GM12878 (cell line): ENCODE measurements at regions of chr2 and their contacts with region 1.

Region 1: GRCh38 chr2:69798909-69799526 is 30.4 kb upstream of the GMCL1 start:
- DNase-seq: no peak
- ATAC-seq: peak; percentile 68
- H3K4me3 ChIP-seq: peak overlapping the region; percentile 69
- H3K27ac ChIP-seq: peak overlapping the region; percentile 77
- H3K4me1 ChIP-seq: peaks cover 69% of the 10 kb centered on the region
- H3K27me3 ChIP-seq: no peaks in the 10 kb centered on the region
- CTCF ChIP-seq: no peak
- EP300 ChIP-seq: no peak
- POLR2A ChIP-seq: no peak
- RAD21 ChIP-seq: no peak

Region 2: GRCh38 chr2:69734035-69734631 is 64.9 kb before region 1 on chr2:
- CTCF ChIA-PET with region 1: interaction called, 6 read pairs
- POLR2A ChIA-PET with region 1: interaction called, 6 read pairs
- RAD21 ChIA-PET with region 1: interaction called, 6 read pairs
- SMC1A ChIA-PET with region 1: interaction called, 11 read pairs
- in situ Hi-C with region 1: no loop called
- intact Hi-C with region 1: no loop called
- DNase-seq: no peak
- ATAC-seq: no peak
- H3K4me3 ChIP-seq: no peak overlapping the region
- H3K27ac ChIP-seq: no peak overlapping the region
- H3K4me1 ChIP-seq: peaks cover 20% of the 10 kb centered on the region
- H3K27me3 ChIP-seq: no peaks in the 10 kb centered on the region
- CTCF ChIP-seq: no peak
- EP300 ChIP-seq: no peak
- POLR2A ChIP-seq: no peak
- RAD21 ChIP-seq: no peak

Region 3: DNA sequence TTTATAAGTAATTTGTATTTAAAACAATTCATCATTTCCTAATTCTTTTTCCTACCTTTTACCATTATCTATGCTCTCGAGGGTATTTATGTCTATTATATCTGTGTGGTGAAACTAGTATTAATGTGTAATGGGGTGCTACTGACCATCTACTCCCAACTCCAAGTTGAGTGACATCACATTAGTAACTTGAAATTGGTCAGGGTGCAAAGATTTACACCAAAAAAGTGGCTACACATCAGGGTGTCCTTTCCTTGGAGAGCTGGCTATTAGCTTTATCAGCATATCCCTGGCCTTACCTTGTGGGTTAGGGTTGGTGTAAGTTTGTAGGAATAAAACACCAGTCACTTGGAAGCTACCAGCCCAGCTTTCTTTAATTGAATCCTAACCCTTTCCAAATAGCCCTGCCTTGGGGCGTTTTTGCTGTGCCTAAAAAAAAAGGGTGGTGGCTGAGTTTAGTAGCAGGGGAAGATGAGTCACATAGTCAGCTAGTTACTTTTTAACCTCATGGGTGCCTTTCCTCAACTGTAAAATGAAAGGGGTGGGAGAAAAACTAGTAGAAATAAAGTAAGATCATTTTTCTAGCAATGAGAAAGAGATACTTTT is 43.1 kb before region 1 on chr2:
- CTCF ChIA-PET with region 1: no interaction called
- POLR2A ChIA-PET with region 1: interaction called, 10 read pairs
- RAD21 ChIA-PET with region 1: interaction called, 10 read pairs
- SMC1A ChIA-PET with region 1: interaction called, 12 read pairs
- in situ Hi-C with region 1: no loop called
- intact Hi-C with region 1: no loop called
- DNase-seq: no peak
- ATAC-seq: peak; percentile 90
- H3K4me3 ChIP-seq: no peak overlapping the region
- H3K27ac ChIP-seq: no peak overlapping the region
- H3K4me1 ChIP-seq: peaks cover 7% of the 10 kb centered on the region
- H3K27me3 ChIP-seq: no peaks in the 10 kb centered on the region
- CTCF ChIP-seq: no peak
- EP300 ChIP-seq: no peak
- POLR2A ChIP-seq: no peak
- RAD21 ChIP-seq: no peak

Region 4: GRCh38 chr2:69762513-69763497 is 36.2 kb before region 1 on chr2:
- CTCF ChIA-PET with region 1: interaction called, 5 read pairs
- POLR2A ChIA-PET with region 1: interaction called, 7 read pairs
- RAD21 ChIA-PET with region 1: interaction called, 21 read pairs
- SMC1A ChIA-PET with region 1: interaction called, 26 read pairs
- in situ Hi-C with region 1: no loop called
- intact Hi-C with region 1: no loop called
- DNase-seq: no peak
- ATAC-seq: peak; percentile 46
- H3K4me3 ChIP-seq: no peak overlapping the region
- H3K27ac ChIP-seq: peak overlapping the region; percentile 9; the same call in 1 of the 2 replicates
- H3K4me1 ChIP-seq: peaks cover 44% of the 10 kb centered on the region
- H3K27me3 ChIP-seq: no peaks in the 10 kb centered on the region
- CTCF ChIP-seq: no peak
- EP300 ChIP-seq: no peak
- POLR2A ChIP-seq: no peak
- RAD21 ChIP-seq: no peak

Region 5: GRCh38 chr2:69770193-69771146 is 28.5 kb before region 1 on chr2:
- CTCF ChIA-PET with region 1: interaction called, 7 read pairs
- POLR2A ChIA-PET with region 1: interaction called, 17 read pairs
- RAD21 ChIA-PET with region 1: interaction called, 33 read pairs
- SMC1A ChIA-PET with region 1: interaction called, 16 read pairs
- in situ Hi-C with region 1: no loop called
- intact Hi-C with region 1: no loop called
- DNase-seq: no peak
- ATAC-seq: peak; percentile 62
- H3K4me3 ChIP-seq: no peak overlapping the region
- H3K27ac ChIP-seq: no peak overlapping the region
- H3K4me1 ChIP-seq: peaks cover 60% of the 10 kb centered on the region
- H3K27me3 ChIP-seq: no peaks in the 10 kb centered on the region
- CTCF ChIP-seq: no peak
- EP300 ChIP-seq: no peak
- POLR2A ChIP-seq: no peak
- RAD21 ChIP-seq: no peak

Region 6: DNA sequence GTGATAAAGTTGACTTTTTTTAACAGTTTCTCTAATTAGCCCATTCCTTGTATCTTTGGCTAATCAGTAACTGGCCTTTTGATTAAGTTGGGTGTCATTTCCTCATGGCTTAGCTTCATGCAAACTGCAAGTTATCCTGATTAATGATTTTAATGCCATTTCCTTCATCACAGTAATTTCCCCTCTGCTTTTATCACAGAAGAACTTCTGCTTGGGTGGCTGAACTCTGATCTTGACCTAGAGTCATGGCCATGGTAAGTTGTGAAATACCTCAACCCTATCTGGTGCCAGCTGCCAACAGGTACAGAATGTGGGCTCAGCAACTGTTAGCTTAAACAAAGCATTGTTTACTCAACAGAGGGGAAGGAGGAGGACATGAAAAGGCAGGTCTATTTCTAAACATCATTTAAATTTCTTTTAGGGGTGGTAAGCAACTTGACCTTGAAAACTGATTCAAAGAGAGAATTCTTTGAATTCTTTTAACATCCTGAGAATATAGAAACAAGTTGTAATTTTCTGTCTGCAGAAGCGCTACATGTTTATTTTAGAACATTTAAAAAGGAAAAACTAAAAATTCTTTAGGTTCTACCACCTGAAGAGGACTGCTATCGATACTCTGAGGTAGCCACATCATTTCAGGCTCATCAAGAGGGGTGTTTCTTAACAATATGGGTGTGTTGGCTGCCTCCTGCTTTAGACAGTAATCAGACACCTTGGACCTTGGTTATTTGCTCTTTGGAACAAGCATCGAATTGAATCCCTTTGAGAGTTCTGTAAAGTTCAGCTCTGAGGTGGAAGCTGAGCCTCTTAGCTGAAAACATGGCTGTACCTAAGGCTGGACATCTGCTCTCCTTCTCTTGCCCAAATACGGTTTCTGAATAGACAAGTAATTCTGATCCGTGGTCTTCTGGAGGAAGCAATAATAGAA is 17.4 kb before region 1 on chr2:
- CTCF ChIA-PET with region 1: interaction called, 4 read pairs
- POLR2A ChIA-PET with region 1: interaction called, 17 read pairs
- RAD21 ChIA-PET with region 1: interaction called, 33 read pairs
- SMC1A ChIA-PET with region 1: interaction called, 16 read pairs
- in situ Hi-C with region 1: no loop called
- intact Hi-C with region 1: no loop called
- DNase-seq: no peak
- ATAC-seq: peak; percentile 88
- H3K4me3 ChIP-seq: 0 out of 2 replicates have a peak overlapping the region, but pooled peaks have one; percentile 21
- H3K27ac ChIP-seq: peak overlapping the region; percentile 42
- H3K4me1 ChIP-seq: peaks cover 14% of the 10 kb centered on the region
- H3K27me3 ChIP-seq: no peaks in the 10 kb centered on the region
- CTCF ChIP-seq: no peak
- EP300 ChIP-seq: no peak
- POLR2A ChIP-seq: no peak
- RAD21 ChIP-seq: no peak

Region 7: DNA sequence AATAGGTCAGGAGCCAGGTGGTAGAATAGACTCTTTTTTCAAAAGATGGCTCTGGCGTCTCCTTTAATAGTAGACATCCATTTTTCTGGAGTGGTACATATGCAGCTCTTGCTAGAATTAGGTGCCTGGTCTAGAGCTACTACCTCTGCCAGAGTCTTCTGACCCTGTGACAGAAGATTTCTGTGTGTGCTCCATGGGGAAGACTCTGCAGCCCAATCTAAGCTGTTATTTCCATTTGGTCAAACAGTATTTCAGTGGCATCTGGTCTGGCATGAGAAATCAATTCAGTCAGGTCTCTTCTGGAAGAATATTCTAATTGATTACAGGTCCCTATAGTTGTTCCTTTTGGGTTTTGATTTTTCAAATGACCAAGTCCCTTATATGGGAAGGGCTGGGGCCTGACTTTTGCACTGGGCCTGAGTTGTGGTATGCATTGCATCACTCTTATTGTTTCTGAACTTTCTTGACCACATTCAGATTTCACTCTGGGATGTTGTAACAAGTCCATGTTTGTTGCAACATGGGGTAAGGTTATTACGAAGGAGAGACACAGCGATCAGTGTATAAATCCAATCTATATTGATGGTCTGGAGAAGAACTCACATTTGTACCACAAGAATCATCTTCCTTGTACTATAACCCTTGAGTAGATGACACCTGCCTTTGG is 128.0 kb after region 1 on chr2:
- CTCF ChIA-PET with region 1: no interaction called
- POLR2A ChIA-PET with region 1: no interaction called
- RAD21 ChIA-PET with region 1: no interaction called
- SMC1A ChIA-PET with region 1: no interaction called
- in situ Hi-C with region 1: no loop called
- intact Hi-C with region 1: no loop called
- DNase-seq: no peak
- ATAC-seq: no peak
- H3K4me3 ChIP-seq: no peak overlapping the region
- H3K27ac ChIP-seq: no peak overlapping the region
- H3K4me1 ChIP-seq: peaks cover 4% of the 10 kb centered on the region; the same call in 1 of the 2 replicates
- H3K27me3 ChIP-seq: no peaks in the 10 kb centered on the region
- CTCF ChIP-seq: no peak
- EP300 ChIP-seq: no peak
- POLR2A ChIP-seq: no peak
- RAD21 ChIP-seq: no peak